GM12878 (cell line): ENCODE measurements at regions of chr19 and their contacts with region 1.

Region 1: GRCh38 chr19:17069218-17069617 is 6.0 kb downstream of the HAUS8 start:
- DNase-seq: no peak
- ATAC-seq: no peak
- H3K4me3 ChIP-seq: no peak overlapping the region
- H3K27ac ChIP-seq: no peak overlapping the region
- H3K4me1 ChIP-seq: peaks cover 35% of the 10 kb centered on the region
- H3K27me3 ChIP-seq: no peaks in the 10 kb centered on the region
- CTCF ChIP-seq: peak in 1 of 3 experiments; percentile 21; a peak in 1 of 6 replicates
- EP300 ChIP-seq: no peak
- POLR2A ChIP-seq: no peak
- RAD21 ChIP-seq: no peak

Region 2: DNA sequence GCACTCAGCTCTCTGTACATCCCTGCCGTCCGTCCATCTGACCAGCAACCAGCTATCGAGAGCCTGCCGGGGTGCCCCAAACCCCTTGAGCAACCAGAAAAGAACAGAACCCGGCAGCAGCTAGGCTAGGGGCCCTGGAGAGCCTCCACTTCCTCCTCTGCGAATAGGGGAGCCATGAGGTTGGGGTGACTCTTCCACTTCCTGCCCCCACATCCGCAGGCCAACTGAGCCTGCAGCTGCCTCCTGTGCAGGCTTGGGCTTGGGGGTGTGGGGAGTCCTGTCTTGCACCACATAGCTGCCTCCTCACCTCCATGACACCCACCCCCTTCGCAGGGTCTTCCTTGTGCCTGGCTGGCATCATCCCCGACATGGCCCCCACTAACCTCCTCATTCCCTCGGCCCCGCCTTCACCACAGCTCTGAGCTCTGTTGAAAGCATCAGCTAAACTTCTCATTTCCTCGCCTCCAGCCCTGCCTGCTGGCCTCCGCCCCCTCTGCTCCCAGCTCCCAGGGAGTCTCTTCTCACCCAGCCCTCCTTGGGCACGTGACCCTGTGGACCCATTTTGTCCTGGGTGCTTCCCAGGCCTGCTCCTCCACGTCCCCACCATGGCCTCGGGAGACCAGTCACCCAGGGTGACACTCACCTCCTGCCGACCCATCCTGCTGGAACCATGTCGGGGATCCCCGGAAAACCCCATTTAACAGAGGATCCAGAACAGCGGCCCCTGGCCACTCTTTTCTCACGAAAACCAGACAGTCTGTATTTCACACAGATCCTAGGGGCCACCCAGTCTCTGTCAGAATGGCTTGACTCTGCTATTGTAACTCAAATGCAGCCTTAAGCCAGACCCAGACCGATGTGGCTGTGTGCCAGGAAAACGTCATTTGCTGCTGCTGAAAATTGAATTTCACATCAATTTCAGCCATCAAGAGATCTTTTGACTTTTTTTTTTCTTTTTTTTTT is 56.8 kb after region 1 on chr19:
- CTCF ChIA-PET with region 1: interaction called, 9 read pairs
- POLR2A ChIA-PET with region 1: interaction called, 111 read pairs
- RAD21 ChIA-PET with region 1: interaction called, 19 read pairs
- SMC1A ChIA-PET with region 1: interaction called, 24 read pairs
- in situ Hi-C with region 1: no loop called
- intact Hi-C with region 1: no loop called
- DNase-seq: peak; percentile 79
- ATAC-seq: peak; percentile 80
- H3K4me3 ChIP-seq: peak overlapping the region; percentile 61
- H3K27ac ChIP-seq: peak overlapping the region; percentile 97
- H3K4me1 ChIP-seq: peaks cover 48% of the 10 kb centered on the region
- H3K27me3 ChIP-seq: no peaks in the 10 kb centered on the region
- CTCF ChIP-seq: 0 out of 6 replicates have a peak, but pooled peaks of 1 of the 3 experiments have one; percentile 11
- EP300 ChIP-seq: peak; percentile 12 to 54; a peak in 1 of 4 replicates
- POLR2A ChIP-seq: peak; percentile 79
- RAD21 ChIP-seq: peak; percentile 23; the same call in 1 of the 2 replicates

Region 3: GRCh38 chr19:17183858-17184321 is 114.7 kb after region 1 on chr19:
- CTCF ChIA-PET with region 1: interaction called, 4 read pairs
- POLR2A ChIA-PET with region 1: interaction called, 5 read pairs
- RAD21 ChIA-PET with region 1: interaction called, 7 read pairs
- SMC1A ChIA-PET with region 1: interaction called, 3 read pairs
- in situ Hi-C with region 1: no loop called
- intact Hi-C with region 1: loop called (anchors 10 kb)
- DNase-seq: peak; percentile 45
- ATAC-seq: peak; percentile 80
- H3K4me3 ChIP-seq: no peak overlapping the region
- H3K27ac ChIP-seq: peak overlapping the region; percentile 87
- H3K4me1 ChIP-seq: peaks cover 24% of the 10 kb centered on the region
- H3K27me3 ChIP-seq: no peaks in the 10 kb centered on the region
- CTCF ChIP-seq: no peak
- EP300 ChIP-seq: no peak; a peak in 1 of 4 replicates
- POLR2A ChIP-seq: no peak
- RAD21 ChIP-seq: 0 out of 2 replicates have a peak, but pooled peaks have one; percentile 17

Region 4: DNA sequence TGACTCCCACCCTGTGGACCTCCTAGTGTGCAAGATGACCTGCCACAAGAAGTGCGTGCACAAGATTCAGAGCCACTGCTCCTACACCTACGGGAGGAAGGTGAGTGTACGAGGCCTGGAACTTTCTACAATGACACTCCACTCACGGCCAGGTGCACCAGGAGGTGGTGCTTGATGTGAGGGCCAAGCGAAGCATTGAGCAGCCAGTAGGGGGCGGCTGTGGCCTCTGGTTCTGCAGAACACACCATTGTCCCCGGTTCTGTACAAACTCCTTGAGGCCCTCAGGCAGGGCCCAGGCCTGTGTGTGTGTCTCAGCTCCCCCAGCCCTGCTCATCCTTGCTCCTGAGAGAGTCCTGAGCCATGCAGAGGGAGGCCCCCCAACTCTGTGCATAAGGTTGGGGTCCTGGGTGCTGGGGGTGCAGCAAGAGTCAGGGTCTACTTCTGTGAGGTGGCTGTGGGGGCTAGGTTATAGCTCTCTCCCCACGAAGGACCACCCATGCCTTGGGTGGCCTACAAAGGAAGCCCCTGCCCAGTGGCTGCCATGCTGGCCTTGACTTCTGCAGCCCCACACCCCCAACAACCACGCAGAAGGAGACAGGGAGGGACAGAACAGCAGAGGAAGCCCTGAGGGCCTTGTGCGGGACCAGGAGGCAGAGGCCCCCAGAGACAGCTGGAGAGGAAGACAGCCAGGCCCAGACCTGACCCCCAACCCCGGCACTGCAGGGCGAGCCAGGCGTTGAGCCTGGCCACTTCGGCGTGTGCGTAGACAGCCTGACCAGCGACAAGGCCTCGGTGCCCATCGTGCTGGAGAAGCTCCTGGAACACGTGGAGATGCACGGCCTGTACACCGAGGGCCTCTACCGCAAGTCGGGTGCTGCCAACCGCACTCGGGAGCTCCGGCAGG is 136.3 kb after region 1 on chr19:
- CTCF ChIA-PET with region 1: interaction called, 3 read pairs
- POLR2A ChIA-PET with region 1: no interaction called
- RAD21 ChIA-PET with region 1: no interaction called
- SMC1A ChIA-PET with region 1: interaction called, 3 read pairs
- in situ Hi-C with region 1: no loop called
- intact Hi-C with region 1: loop called (anchors 1 kb)
- DNase-seq: no peak
- ATAC-seq: peak; percentile 77
- H3K4me3 ChIP-seq: no peak overlapping the region
- H3K27ac ChIP-seq: no peak overlapping the region
- H3K4me1 ChIP-seq: no peaks in the 10 kb centered on the region
- H3K27me3 ChIP-seq: no peaks in the 10 kb centered on the region
- CTCF ChIP-seq: peak; percentile 57 to 73 (median 71)
- EP300 ChIP-seq: no peak
- POLR2A ChIP-seq: peak; percentile 60
- RAD21 ChIP-seq: peak; percentile 33

Region 5: DNA sequence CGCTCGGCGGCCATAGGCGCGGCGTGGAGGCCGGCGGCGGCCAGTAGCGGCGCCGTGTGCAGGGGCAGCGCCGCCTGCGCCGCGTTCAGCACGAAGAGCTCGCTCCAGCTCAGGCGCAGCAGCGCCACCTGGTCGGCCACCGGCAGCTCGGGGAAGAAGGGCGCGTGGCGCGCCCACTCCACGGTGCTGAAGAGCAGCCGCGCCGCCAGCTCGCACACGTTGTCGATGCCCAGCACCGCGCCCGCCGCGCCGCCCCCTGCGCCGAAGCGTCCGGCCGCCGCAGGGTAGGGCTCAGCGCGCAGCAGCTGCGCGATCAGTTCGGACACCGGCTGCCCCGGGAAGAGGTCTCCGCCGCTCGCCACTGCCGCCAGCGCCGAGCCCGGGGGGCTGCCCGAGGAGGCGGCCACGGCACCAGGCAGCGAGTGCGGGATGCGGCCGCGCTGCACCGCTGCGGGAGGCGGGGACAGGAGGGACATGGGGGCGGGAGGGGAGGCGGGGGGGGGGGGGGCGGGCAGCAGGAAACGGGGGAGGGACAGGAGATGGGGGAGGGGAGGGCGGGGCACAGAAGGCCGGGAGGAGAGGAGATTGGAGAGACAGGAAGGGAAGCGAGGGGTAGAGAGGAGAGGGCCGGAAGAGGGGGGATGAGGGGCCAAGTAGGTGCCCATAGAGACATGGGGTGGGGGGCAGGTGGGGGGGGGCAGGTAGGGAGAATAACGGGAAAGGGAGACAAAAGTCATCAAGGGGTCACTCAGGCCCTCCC is 166.6 kb after region 1 on chr19:
- CTCF ChIA-PET with region 1: interaction called, 24 read pairs
- POLR2A ChIA-PET with region 1: no interaction called
- RAD21 ChIA-PET with region 1: interaction called, 21 read pairs
- SMC1A ChIA-PET with region 1: interaction called, 3 read pairs
- in situ Hi-C with region 1: no loop called
- intact Hi-C with region 1: loop called (anchors 2 kb)
- DNase-seq: no peak
- ATAC-seq: peak; percentile 93
- H3K4me3 ChIP-seq: peak overlapping the region; percentile 89
- H3K27ac ChIP-seq: peak overlapping the region; percentile 50
- H3K4me1 ChIP-seq: 0 out of 2 replicates have a peak, but pooled peaks cover 4% of the 10 kb centered on the region
- H3K27me3 ChIP-seq: no peaks in the 10 kb centered on the region
- CTCF ChIP-seq: peak; percentile 45 to 90 (median 67); a peak in 5 of 6 replicates
- EP300 ChIP-seq: no peak
- POLR2A ChIP-seq: peak; percentile 39
- RAD21 ChIP-seq: peak; percentile 39; the same call in 1 of the 2 replicates

Region 6: DNA sequence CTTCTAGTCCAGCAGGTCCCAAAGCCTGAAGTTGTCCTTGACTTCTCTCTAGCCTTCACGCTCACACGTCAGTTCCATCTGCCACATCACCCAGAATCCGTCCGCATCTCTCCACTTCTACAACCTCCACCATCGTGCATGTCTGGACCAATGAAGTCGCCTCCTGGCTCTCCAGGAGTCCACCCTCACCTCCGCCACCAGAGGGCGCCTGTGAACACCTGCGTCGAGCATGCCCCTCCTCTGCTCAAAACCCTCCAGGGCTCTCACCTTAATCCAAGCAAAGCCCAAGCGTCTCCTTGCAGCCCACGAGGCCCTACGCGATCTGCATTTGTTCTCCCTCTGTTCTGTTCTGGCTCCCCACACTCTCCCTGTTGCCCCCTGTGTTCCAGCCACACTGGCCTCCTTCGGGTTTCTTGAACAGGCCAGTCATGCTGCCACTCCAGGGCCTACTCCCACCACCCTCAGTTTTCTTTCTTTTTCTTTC is 191.7 kb after region 1 on chr19:
- CTCF ChIA-PET with region 1: interaction called, 5 read pairs
- POLR2A ChIA-PET with region 1: no interaction called
- RAD21 ChIA-PET with region 1: interaction called, 5 read pairs
- SMC1A ChIA-PET with region 1: interaction called, 7 read pairs
- in situ Hi-C with region 1: no loop called
- intact Hi-C with region 1: loop called (anchors 5 kb)
- DNase-seq: no peak
- ATAC-seq: peak; percentile 100
- H3K4me3 ChIP-seq: no peak overlapping the region
- H3K27ac ChIP-seq: no peak overlapping the region
- H3K4me1 ChIP-seq: peaks cover 7% of the 10 kb centered on the region
- H3K27me3 ChIP-seq: no peaks in the 10 kb centered on the region
- CTCF ChIP-seq: peak; percentile 90 to 99 (median 97)
- EP300 ChIP-seq: no peak
- POLR2A ChIP-seq: no peak
- RAD21 ChIP-seq: peak; percentile 67

Region 7: GRCh38 chr19:17282488-17283255 is 213.5 kb after region 1 on chr19:
- CTCF ChIA-PET with region 1: interaction called, 16 read pairs
- POLR2A ChIA-PET with region 1: no interaction called
- RAD21 ChIA-PET with region 1: interaction called, 22 read pairs
- SMC1A ChIA-PET with region 1: interaction called, 9 read pairs
- in situ Hi-C with region 1: loop called (anchors 5 kb)
- intact Hi-C with region 1: loop called (anchors 1 kb)
- DNase-seq: peak; percentile 46
- ATAC-seq: peak; percentile 92
- H3K4me3 ChIP-seq: peak overlapping the region; percentile 85
- H3K27ac ChIP-seq: peak overlapping the region; percentile 68
- H3K4me1 ChIP-seq: peaks cover 9% of the 10 kb centered on the region
- H3K27me3 ChIP-seq: no peaks in the 10 kb centered on the region
- CTCF ChIP-seq: peak; percentile 90 to 96 (median 94); a peak in 5 of 6 replicates
- EP300 ChIP-seq: no peak
- POLR2A ChIP-seq: peak; percentile 58
- RAD21 ChIP-seq: peak; percentile 79